HEK293 (cell line): ENCODE measurements at regions of chr2 and their contacts with region 1.

Region 1: DNA sequence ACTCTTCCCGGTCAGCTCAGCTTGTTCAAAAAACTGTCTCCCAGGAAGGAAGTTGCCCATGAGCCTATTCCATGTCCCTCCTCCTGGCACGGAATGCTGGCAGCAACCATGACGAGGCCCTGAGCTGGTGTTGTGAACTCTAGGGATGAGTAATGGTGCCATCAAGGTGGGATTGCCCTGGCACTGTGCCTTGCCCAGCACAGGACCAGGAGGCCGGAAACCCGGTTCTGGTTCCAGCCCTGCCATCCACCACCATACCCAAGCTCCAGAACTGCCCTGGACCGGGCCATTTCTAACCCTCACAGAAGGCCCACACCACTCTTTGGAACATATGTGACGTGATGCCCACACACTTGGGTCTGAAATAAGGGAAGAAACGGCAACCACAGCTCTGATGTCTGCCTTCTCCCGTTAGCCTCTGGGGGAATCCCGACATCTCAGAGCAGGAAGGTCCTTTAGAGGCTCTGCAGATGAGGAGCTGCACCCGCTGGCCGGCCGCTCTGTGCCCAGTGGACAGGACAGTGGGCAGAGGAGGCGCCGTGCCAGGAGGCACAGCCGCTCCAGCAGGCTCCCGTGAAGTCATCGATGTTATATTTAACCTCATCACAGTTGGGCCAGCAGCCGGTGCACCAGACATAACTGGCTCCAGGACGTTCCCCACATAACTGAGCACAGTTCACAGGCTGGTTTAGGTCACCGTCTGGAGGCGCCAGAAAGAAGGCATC is 462.1 kb upstream of the ID2 start:
- H3K4me3 ChIP-seq: no peak overlapping the region
- H3K27ac ChIP-seq: no peak overlapping the region
- H3K4me1 ChIP-seq: no peaks in the 10 kb centered on the region
- CTCF ChIP-seq: no peak

Region 2: DNA sequence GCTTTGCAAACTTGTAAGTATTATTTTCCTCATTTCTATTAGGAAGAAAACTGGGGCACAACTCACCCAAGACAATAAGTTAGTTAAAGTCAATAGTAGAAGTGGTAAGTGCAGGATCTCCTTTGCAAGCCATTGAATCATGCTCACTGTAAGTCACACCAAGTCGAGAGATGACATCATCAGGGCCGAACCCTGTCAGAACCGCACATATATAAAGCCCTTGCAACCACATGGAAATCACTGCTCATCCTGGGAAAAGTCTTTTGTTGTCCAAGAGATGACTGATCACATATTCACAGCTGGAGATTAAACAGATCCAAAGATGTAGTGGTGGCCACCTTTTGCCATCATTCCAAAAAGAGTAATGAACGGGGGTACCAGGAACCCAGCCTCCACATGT is 22.7 kb before region 1 on chr2:
- CTCF ChIA-PET with region 1: no interaction called
- POLR2A ChIA-PET with region 1: interaction called, 10 read pairs
- H3K4me3 ChIP-seq: no peak overlapping the region
- H3K27ac ChIP-seq: no peak overlapping the region
- H3K4me1 ChIP-seq: no peaks in the 10 kb centered on the region
- CTCF ChIP-seq: no peak

Region 3: GRCh38 chr2:8234757-8235374 is 15.1 kb after region 1 on chr2:
- CTCF ChIA-PET with region 1: no interaction called
- POLR2A ChIA-PET with region 1: no interaction called
- H3K4me3 ChIP-seq: no peak overlapping the region
- H3K27ac ChIP-seq: no peak overlapping the region
- H3K4me1 ChIP-seq: no peaks in the 10 kb centered on the region
- CTCF ChIP-seq: no peak

Region 4: GRCh38 chr2:8303322-8303832 is 83.6 kb after region 1 on chr2:
- CTCF ChIA-PET with region 1: no interaction called
- POLR2A ChIA-PET with region 1: no interaction called
- H3K4me3 ChIP-seq: no peak overlapping the region
- H3K27ac ChIP-seq: no peak overlapping the region
- H3K4me1 ChIP-seq: no peaks in the 10 kb centered on the region
- CTCF ChIP-seq: no peak